ENCODE measurements at regions of chr3 and their contacts with region 1.

Region 1: GRCh38 chr3:184298759-184299496 is at the start of gene PSMD2:
- DNase-seq: peak; percentile 92

Region 2: GRCh38 chr3:183884427-183885296 is 414.3 kb before region 1 on chr3 and contains the start of gene PARL:
- in situ Hi-C with region 1: loop called (anchors 25 kb)
- DNase-seq: peak; percentile 98

Measured in KBM-7 (cell line).